MCF 10A (cell line): ENCODE measurements at regions of chr16 and their contacts with region 1.

Region 1: DNA sequence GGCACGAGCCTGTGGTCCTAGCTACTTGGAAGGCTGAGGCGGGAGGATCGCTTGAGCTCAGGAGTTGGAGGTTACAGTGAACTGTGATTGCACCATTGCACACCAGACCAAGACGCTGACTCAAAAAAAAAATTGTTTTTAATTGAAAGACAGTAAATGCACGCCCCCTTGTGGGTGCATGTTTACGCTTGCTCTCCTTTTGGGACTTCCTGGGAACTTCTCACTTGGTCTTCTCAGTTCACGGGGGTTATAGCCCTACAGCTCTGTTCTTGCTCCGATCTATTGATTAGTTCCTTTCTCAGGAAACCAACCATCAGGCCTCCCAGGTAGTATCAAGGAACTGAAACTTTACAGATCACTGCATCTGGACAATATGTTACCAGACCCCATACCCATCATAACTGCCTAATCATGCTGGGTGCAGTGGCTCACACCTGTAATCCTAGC is 14.2 kb upstream of the RIPOR1 start:
- DNase-seq: peak; percentile 88
- H3K4me3 Mint-ChIP-seq: no peak overlapping the region
- H3K27ac Mint-ChIP-seq: no peak overlapping the region
- H3K4me1 Mint-ChIP-seq: peaks cover 8% of the 10 kb centered on the region
- H3K27me3 Mint-ChIP-seq: peaks cover 13% of the 10 kb centered on the region
- CTCF ChIP-seq: peak; percentile 55

Region 2: DNA sequence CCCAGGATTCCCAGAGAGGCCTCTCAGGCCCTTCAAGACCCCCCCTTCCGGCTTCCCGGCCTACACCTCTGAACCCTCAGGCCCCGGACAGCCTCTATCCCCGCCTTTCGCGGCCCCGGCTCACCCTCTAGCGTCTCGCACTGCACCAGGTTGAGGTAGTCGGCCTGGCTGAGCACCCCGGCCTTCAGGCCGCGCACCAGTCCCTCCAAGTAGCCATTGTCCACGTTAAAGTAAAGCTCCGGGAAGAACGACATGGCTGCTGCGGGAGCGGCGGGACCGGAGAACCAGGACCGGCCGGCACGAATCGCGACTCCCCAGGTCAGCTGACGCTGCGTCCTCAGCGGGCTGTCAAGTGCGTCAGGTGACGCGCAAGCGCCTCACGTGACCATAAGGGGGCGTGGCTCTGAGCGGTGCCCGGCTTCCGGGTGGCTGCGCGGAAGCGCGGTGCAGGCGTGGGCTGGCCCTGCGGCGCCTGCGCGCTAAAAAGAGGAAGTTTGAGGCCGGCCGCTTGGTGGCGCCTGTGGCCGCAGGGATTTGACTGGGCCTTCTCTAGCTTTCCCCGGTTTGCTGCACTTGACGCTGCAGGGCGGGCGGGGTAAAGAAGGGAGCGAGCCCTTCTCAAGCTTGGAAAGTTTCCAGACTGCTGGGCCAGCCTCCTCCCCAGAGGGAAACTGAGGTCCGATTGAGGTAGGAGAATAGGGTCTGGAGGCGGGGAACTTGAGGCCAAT is 33.4 kb before region 1 on chr16 and contains the start of gene ATP6V0D1:
- CTCF ChIA-PET with region 1: interaction called, 24 read pairs
- POLR2A ChIA-PET with region 1: interaction called, 21 read pairs
- intact Hi-C with region 1: loop called (anchors 1 kb)
- DNase-seq: peak; percentile 96
- H3K4me3 Mint-ChIP-seq: peak within 1 kb of the TSS; percentile 98
- H3K27ac Mint-ChIP-seq: peak within 1 kb of the TSS; percentile 97
- H3K4me1 Mint-ChIP-seq: peaks cover 22% of the 10 kb centered on the region
- H3K27me3 Mint-ChIP-seq: no peaks in the 10 kb centered on the region
- CTCF ChIP-seq: peak; percentile 79
- total RNA-seq, gene ATP6V0D1: 50.5 and 50.7 TPM in 2 replicates

Region 3: GRCh38 chr16:67490335-67491096 is 23.9 kb before region 1 on chr16:
- CTCF ChIA-PET with region 1: interaction called, 69 read pairs
- POLR2A ChIA-PET with region 1: interaction called, 5 read pairs
- intact Hi-C with region 1: loop called (anchors 1 kb)
- DNase-seq: peak; percentile 36
- H3K4me3 Mint-ChIP-seq: no peak overlapping the region
- H3K27ac Mint-ChIP-seq: no peak overlapping the region
- H3K4me1 Mint-ChIP-seq: no peaks in the 10 kb centered on the region
- H3K27me3 Mint-ChIP-seq: no peaks in the 10 kb centered on the region
- CTCF ChIP-seq: no peak

Region 4: GRCh38 chr16:67499106-67499505 is 15.3 kb before region 1 on chr16:
- CTCF ChIA-PET with region 1: interaction called, 69 read pairs
- POLR2A ChIA-PET with region 1: interaction called, 3 read pairs
- intact Hi-C with region 1: loop called (anchors 1 kb)
- DNase-seq: no peak
- H3K4me3 Mint-ChIP-seq: no peak overlapping the region
- H3K27ac Mint-ChIP-seq: no peak overlapping the region
- H3K4me1 Mint-ChIP-seq: no peaks in the 10 kb centered on the region
- H3K27me3 Mint-ChIP-seq: no peaks in the 10 kb centered on the region
- CTCF ChIP-seq: no peak

Region 5: DNA sequence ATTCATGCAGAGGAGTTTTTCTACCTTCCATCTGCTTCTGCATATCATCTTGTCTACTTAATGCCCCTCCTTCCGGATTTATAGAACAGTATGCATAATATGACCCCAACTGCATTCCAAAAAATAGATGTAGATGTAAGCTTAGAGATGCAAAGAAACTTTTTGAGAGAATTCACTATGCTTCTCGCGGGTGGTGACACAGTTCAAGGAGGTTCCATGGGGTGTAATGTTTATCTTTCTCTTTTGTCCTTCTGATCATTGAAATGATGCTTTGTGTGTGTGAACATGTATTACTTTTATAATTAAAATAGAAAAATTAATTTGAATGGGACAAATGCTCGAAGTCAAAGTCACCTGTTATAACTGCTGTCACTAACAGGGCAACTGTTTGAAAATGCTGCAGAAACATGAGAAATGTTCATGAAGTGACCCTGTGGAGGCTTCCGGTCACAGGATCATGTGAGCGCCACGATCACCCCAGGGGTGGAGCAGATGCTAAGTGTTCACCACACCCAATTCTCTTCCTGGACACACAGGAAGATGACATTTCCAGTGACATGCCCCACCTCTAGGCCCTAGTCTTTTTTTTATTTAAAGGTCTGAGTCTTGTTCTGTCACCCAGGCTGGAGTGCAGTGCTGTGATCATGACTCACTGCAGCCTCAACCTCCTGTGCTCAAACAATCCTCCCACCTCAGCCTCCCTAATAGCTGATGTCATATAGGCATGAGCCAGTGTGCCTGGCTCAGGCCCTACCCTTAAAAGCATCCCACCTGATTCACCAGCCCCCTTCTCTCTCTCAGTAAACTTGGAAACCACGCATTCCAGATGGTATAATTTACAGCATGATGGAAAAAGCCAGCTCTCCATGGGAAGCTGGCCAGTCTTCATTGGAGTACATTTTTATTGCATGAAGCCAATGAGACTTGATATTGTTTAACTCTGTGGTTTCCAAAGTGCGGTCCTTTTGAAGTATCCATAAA is 10.1 kb before region 1 on chr16:
- CTCF ChIA-PET with region 1: interaction called, 65 read pairs
- POLR2A ChIA-PET with region 1: no interaction called
- intact Hi-C with region 1: no loop called
- DNase-seq: no peak
- H3K4me3 Mint-ChIP-seq: no peak overlapping the region
- H3K27ac Mint-ChIP-seq: no peak overlapping the region
- H3K4me1 Mint-ChIP-seq: peaks cover 5% of the 10 kb centered on the region
- H3K27me3 Mint-ChIP-seq: no peaks in the 10 kb centered on the region
- CTCF ChIP-seq: no peak